Activated T-helper 1 cell treated with anti-CD3 and anti-CD28 coated beads, Interleukin-12 subunit alpha, Interleukin-12 subunit beta, Interleukin-2, Interleukin-4 antibody, amounts not matched to agents 30 ng/mL and 10 ng/mL and 1 ng/mL, durations not matched to agents 14 hours and 24 hours and 36 hours (primary cell): ENCODE measurements at regions of chr7 and their contacts with region 1.

Region 1: DNA sequence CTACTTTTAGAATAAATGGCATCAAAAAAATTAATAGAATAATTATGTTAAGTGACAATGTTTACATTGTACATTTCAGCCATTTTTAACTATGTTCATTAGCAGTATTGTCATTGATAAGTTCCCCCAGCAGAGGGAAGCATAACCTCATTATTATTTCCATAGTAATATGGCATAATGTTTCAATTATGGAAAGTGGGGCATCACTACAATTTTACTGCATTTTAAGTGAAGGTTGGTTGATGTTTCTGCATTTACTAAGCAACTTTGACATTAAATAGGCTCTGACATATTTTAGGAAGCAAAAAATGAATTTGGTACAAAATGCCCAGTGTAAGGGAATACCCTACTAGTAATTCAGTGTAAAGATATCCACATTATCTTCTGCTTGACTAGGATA is 218.3 kb downstream of the SEMA3A start:
- DNase-seq: no peak
- H3K4me3 Mint-ChIP-seq: no peak overlapping the region
- H3K27ac Mint-ChIP-seq: no peak overlapping the region
- H3K4me1 Mint-ChIP-seq: no peaks in the 10 kb centered on the region
- H3K27me3 Mint-ChIP-seq: peaks cover 2% of the 10 kb centered on the region

Region 2: GRCh38 chr7:84188786-84189405 is 212.6 kb after region 1 on chr7:
- intact Hi-C with region 1: loop called (anchors 5 kb)
- DNase-seq: no peak
- H3K4me3 Mint-ChIP-seq: no peak overlapping the region
- H3K27ac Mint-ChIP-seq: no peak overlapping the region
- H3K4me1 Mint-ChIP-seq: peaks cover 2% of the 10 kb centered on the region
- H3K27me3 Mint-ChIP-seq: no peaks in the 10 kb centered on the region

Region 3: GRCh38 chr7:84455788-84456187 is 479.5 kb after region 1 on chr7:
- intact Hi-C with region 1: loop called (anchors 1 kb)
- DNase-seq: no peak
- H3K4me3 Mint-ChIP-seq: no peak overlapping the region
- H3K27ac Mint-ChIP-seq: no peak overlapping the region
- H3K4me1 Mint-ChIP-seq: no peaks in the 10 kb centered on the region
- H3K27me3 Mint-ChIP-seq: no peaks in the 10 kb centered on the region